ENCODE measurements at regions of chr1 and their contacts with region 1.

Region 1: DNA sequence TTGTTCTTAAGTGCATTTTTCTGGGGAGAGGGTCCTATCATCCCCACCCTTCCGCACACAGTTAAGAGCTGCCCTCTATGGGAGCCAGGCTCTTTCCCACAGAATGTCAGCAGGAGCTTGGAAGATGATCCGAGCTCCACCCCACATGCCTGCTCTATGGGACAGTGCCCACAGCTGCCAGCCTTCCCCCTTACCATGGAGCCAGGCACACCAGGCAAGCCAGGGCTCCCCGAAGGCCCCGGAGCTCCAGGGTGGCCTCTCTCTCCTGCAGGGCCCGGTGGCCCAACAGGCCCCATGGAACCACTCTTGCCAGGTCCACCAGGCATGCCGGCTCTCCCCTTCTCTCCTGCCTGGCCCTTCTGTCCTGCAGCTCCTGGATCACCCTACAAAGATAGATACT is 10.4 kb upstream of the PEF1 start:
- DNase-seq: no peak
- H3K4me3 Mint-ChIP-seq: no peak overlapping the region
- H3K27ac Mint-ChIP-seq: no peak overlapping the region
- H3K4me1 Mint-ChIP-seq: no peaks in the 10 kb centered on the region
- H3K27me3 Mint-ChIP-seq: peaks cover 65% of the 10 kb centered on the region
- CTCF ChIP-seq: no peak

Region 2: DNA sequence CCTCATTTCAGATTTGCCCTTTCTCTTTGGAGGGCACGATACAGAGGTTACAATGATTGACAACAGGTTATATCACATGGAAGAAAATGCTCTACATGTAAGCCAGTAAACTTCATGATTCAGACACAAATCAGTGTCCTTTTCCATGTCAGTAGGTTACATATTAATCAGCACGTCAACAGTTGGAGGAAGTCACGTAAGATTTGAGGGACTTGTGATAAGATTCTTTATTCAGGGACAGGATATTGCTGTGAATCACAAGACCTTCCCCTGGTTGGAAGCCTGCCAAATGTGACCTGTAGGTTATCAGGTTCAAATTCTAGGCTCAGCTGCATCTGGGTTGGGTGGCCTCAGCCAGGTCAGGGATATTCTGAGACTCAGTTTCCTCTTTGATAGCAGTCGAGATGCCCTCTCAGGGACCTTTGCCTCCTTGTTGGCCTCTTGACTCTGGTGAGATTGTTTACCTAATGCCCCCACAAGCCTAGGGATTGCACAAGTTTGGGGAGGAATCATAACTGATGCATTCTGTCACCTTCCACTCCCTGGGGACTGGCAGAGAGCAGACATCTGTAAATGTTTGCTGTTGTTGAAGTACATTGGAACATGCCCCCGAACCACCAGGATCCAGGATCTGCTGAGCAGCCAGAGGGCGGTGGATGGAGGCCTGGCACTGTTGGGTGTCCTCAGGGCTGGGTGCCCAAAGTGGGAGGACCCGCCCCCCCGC is 210.2 kb before region 1 on chr1:
- CTCF ChIA-PET with region 1: no interaction called
- intact Hi-C with region 1: no loop called
- DNase-seq: peak; percentile 57
- H3K4me3 Mint-ChIP-seq: peak overlapping the region; percentile 14
- H3K27ac Mint-ChIP-seq: peak overlapping the region; percentile 81
- H3K4me1 Mint-ChIP-seq: peaks cover 31% of the 10 kb centered on the region
- H3K27me3 Mint-ChIP-seq: no peaks in the 10 kb centered on the region
- CTCF ChIP-seq: no peak

Region 3: DNA sequence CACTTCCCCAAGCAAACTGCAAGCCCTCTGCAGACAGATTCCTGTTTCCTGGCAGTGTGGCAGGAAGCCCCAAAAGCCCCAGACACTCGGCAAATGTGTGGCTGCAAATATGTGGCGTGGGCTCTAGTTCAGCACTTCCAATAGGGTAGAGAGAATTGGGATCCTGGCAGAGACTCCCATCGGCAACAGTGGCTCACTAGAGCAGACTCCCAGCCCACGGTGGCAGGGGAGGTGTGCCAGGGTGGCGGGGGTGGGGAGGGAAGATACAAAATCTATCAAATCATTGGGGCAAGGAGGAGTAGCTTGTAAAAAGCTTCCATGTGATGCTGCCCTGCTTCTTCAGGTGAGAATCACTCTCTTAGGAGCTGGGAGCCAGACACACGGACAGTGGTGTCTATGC is 22.8 kb after region 1 on chr1:
- CTCF ChIA-PET with region 1: interaction called, 10 read pairs
- intact Hi-C with region 1: no loop called
- DNase-seq: no peak
- H3K4me3 Mint-ChIP-seq: no peak overlapping the region
- H3K27ac Mint-ChIP-seq: no peak overlapping the region
- H3K4me1 Mint-ChIP-seq: no peaks in the 10 kb centered on the region
- H3K27me3 Mint-ChIP-seq: peaks cover 70% of the 10 kb centered on the region
- CTCF ChIP-seq: no peak

Measured in Calu3 (cell line).